ENCODE measurements at regions of chr11 and their contacts with region 1.

Region 1: DNA sequence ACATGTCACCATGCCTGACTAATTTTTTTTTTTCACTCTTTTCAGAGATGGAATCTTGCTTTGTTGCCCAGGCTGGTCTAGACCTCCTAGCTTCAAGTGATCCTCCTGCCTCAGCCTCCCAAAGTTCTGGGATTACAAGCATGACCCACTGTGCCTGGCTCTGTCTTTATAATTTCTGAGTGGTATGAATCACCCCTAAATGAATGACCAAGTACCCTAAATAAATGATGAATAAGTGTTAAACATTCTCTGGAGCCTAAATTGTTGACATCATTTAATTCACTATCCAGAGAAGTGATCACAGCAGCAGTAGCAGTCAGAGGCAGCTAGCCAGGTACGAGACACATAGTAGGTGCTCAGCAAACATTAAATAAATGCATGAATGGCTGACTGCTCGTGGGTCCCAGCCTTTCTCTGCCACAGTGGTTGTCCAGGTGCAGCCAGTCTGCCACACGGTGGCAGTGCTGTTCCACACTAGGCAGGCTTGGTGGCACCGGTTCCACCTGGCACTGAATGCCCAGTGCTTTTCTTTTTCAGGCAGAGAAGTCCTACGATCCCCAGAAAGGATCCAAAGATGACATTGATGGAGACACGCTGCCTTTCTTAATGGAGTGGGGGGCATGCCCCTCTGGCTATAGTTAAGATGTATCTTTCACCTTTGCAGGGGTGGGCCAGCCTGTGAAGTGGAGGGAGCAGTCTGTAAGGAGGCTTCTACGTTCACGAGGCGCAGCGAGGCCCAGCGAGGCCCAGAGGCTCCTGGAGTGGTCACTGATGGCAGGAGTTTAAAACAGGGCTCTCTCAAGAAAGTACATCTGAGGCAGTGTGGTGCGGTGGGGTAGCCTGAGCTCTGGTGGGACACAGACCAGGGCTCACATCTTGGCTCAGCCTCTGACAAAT is 8.7 kb upstream of the TTC12 start:
- DNase-seq: peak; percentile 69
- H3K4me3 ChIP-seq: no peak overlapping the region
- H3K27ac ChIP-seq: no peak overlapping the region
- H3K4me1 ChIP-seq: no peaks in the 10 kb centered on the region
- H3K27me3 ChIP-seq: no peaks in the 10 kb centered on the region
- CTCF ChIP-seq: peak; percentile 94

Region 2: DNA sequence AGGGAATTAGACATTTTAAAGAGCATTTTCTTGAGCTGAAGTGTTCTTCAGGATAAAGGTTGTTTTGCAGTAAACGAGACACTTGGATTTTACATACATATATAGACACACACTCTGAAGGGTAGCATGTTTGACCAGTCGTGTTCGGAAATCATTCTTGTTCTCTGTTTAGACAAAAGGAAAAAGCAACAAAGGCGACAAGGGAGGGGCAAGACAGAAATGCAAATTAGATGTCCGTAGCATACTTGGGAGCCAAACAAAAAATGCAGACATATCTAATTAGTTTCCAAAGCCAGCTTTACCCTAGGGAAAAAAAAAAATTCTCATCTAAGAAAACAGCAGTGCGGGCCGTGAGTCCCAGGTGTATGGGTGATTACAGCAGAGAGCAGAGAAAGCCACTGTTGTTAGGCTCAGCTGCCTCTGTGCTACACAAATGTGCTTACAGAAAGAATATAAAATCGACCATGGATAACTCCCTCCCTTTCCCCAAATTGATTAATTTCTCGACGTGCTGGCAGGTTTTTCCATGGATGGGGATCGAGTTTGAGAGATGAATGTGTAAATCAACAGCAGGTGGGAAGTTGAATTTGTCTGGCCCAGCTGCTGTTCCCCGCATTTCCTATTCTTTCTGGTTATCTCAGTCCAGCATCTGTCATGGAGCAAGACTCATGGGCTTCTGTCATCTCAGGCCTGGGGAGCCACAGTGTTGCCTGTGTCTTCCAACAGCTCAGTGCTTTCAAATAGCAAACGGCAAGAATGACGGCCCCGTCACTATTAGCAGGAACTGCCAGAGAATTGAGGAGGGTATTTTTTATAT is 167.8 kb before region 1 on chr11:
- intact Hi-C with region 1: no loop called
- DNase-seq: no peak
- H3K4me3 ChIP-seq: no peak overlapping the region
- H3K27ac ChIP-seq: no peak overlapping the region
- H3K4me1 ChIP-seq: peaks cover 3% of the 10 kb centered on the region
- H3K27me3 ChIP-seq: no peaks in the 10 kb centered on the region
- CTCF ChIP-seq: no peak

Region 3: GRCh38 chr11:113532697-113533424 is 227.2 kb after region 1 on chr11:
- intact Hi-C with region 1: loop called (anchors 5 kb)
- DNase-seq: peak; percentile 65
- H3K4me3 ChIP-seq: no peak overlapping the region
- H3K27ac ChIP-seq: no peak overlapping the region
- H3K4me1 ChIP-seq: no peaks in the 10 kb centered on the region
- H3K27me3 ChIP-seq: peaks cover 29% of the 10 kb centered on the region
- CTCF ChIP-seq: peak; percentile 91

Region 4: GRCh38 chr11:113730887-113731726 is 425.4 kb after region 1 on chr11:
- intact Hi-C with region 1: loop called (anchors 5 kb)
- DNase-seq: no peak
- H3K4me3 ChIP-seq: no peak overlapping the region
- H3K27ac ChIP-seq: no peak overlapping the region
- H3K4me1 ChIP-seq: no peaks in the 10 kb centered on the region
- H3K27me3 ChIP-seq: no peaks in the 10 kb centered on the region
- CTCF ChIP-seq: peak; percentile 76